ENCODE measurements at regions of chr5 and their contacts with region 1.

Region 1: GRCh38 chr5:72760259-72760658 is 56.2 kb upstream of the TNPO1 start:
- DNase-seq: no peak
- H3K4me3 ChIP-seq: no peak overlapping the region
- H3K27ac ChIP-seq: no peak overlapping the region
- H3K4me1 ChIP-seq: no peaks in the 10 kb centered on the region
- H3K27me3 ChIP-seq: no peaks in the 10 kb centered on the region
- CTCF ChIP-seq: no peak
- EP300 ChIP-seq: no peak
- POLR2A ChIP-seq: no peak

Region 2: DNA sequence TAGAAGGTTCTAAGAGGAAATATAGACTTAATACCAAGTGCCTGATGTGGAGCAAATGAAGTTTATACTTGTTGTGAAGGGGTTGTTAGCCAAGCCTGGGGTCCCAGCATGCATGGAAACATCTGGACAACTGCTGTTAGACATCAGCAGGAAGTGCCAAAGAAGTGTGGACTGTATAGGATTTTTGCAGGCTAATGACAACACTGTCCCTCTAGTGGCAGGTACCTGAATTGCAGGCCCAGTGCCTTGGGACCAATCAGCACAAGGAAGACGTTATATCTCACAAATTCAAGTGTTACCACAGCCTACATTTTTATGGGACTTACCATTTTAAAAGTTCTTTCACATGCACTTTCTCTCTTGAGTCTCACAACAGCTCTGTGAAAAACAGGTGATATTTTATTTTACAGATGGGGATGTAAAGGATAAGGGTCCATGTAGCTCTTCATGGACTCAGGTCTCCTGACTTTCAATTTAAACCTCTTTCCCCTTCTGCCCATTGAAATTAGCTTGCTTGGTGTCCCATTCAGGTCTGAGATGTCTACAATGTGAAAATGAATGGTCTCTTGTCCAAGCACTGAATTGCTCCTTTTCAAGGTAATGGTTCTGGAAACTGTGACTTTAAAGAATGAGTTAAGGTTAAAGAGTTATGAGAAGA is 742.0 kb before region 1 on chr5:
- intact Hi-C with region 1: no loop called
- DNase-seq: peak in 2 of 5 donors; percentile 18 to 19
- H3K4me3 ChIP-seq: no peak overlapping the region
- H3K27ac ChIP-seq: no peak overlapping the region
- H3K4me1 ChIP-seq: no peaks in the 10 kb centered on the region
- H3K27me3 ChIP-seq: no peaks in the 10 kb centered on the region
- CTCF ChIP-seq: peak in 1 of 3 donors; percentile 19
- EP300 ChIP-seq: no peak
- POLR2A ChIP-seq: no peak

Region 3: DNA sequence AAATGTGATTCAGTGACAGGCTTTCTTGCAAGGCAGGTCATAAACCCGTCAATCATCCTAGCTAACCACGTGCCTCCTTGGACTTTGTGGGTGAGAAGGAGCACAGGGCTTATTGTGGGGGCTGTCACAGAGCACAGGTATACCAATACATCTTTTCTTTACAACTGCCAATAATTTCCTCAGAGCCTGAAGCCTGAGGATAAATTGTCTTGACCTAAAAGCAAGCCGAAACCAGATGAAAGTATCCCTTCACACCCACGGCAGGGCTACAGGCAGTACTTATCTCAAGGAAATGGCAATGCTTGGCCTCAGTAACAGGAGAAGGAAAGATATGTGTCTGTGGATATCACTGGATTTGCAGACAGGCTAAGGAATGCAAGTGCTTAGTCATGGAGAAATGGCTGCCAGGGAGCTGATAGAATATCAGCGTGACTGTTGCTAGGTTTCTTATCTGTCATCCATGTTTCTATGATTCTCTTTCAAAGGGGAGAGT is 162.8 kb before region 1 on chr5:
- intact Hi-C with region 1: no loop called
- DNase-seq: no peak
- H3K4me3 ChIP-seq: no peak overlapping the region
- H3K27ac ChIP-seq: no peak overlapping the region
- H3K4me1 ChIP-seq: peaks cover 6% of the 10 kb centered on the region
- H3K27me3 ChIP-seq: no peaks in the 10 kb centered on the region
- CTCF ChIP-seq: no peak
- EP300 ChIP-seq: no peak
- POLR2A ChIP-seq: no peak

Region 4: DNA sequence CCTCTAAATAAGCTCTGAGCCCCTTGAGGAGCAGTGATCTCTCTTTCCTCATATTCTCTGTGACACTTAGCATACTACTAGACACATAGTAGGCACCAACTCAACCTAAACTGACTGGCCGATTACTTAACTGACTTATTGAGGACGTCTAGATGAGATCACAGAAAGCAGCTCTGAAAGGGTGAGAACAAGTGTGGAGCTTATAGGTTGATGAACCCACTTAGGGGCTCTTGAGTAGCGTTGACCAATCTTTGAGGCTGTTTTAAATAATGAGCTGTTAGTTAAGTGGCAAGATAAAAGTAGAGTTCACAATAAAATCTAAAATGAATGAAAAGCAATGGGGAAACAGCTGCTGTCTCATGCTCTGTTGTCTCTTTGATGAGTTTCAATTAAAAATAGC is 68.5 kb before region 1 on chr5:
- intact Hi-C with region 1: loop called in 1 of 4 experiments (anchors 2 kb)
- DNase-seq: no peak
- H3K4me3 ChIP-seq: no peak overlapping the region
- H3K27ac ChIP-seq: no peak overlapping the region
- H3K4me1 ChIP-seq: no peaks in the 10 kb centered on the region
- H3K27me3 ChIP-seq: no peaks in the 10 kb centered on the region
- CTCF ChIP-seq: no peak
- EP300 ChIP-seq: no peak
- POLR2A ChIP-seq: no peak

Region 5: DNA sequence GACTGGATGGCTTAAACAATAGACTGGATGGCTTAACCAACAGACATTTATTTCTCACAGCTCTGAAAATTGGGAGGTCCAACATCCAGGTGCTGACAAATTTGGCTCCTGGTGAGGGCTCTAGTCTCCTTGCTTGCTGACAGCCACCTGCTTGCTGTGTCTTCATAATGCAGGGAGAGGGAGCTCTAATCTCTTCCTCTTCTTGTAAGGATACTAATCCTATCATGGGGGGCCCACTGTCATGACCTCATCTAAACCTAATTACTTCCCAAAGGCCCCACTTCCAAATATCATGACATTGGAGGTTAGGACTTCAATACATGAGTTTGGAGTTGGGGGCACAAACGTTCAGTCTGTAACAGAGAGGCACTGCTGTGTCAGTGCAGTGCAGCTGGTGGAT is 661.9 kb after region 1 on chr5:
- intact Hi-C with region 1: no loop called
- DNase-seq: no peak
- H3K4me3 ChIP-seq: no peak overlapping the region
- H3K27ac ChIP-seq: no peak overlapping the region
- H3K4me1 ChIP-seq: no peaks in the 10 kb centered on the region
- H3K27me3 ChIP-seq: no peaks in the 10 kb centered on the region
- CTCF ChIP-seq: no peak
- EP300 ChIP-seq: no peak
- POLR2A ChIP-seq: no peak

Measured in ovary (tissue), 10 donors.